GM10248 (cell line): ENCODE measurements at regions of chr9 and their contacts with region 1.

Region 1: DNA sequence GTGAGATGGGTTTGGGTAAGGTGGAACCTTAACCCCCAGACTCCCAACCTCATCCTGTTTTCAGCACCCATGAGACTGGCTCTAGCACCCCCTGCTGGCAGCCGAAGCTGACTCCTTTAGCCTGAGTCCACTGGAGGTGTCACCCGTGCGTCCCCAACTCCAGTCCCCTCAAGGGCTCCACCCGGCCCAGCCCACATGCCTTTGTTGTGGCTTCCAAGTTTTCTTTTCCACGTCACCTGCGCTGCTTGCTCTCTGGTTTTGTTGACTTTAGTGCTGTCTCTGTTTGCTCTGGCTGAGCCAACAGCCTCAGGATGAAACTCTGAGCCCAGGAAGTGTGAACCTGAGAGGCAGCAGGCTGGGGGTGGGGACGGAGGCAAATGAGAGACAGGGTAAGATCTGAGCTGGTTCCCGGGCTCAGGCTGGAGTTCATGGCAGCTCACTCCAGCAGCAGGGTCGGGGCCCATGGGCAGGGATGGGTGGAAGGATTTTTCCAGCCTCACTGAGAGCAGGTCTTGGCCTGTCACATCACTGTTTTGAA is 13.2 kb upstream of the AQP7 start:
- DNase-seq: peak; percentile 84
- CTCF ChIP-seq: peak; percentile 69

Region 2: DNA sequence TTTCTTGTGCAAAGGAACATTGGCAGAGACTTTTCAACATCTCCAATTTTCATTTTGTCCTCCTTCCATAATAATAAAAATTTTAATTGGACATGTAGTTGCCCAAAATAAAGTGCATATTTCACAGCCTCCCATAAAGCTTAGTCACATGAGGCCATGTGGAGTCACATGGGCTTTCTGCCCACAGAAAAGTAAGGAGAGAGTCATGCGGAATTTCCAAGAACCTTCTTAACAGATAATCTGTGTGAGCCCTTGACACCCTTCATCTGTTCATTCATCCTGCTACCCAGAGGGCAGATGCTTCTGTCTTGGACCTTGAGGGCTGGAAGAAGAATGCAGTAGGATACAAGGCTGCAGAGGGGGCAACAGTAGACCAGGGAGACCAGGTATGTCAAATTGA is 474.8 kb before region 1 on chr9:
- CTCF ChIA-PET with region 1: no interaction called
- POLR2A ChIA-PET with region 1: no interaction called
- DNase-seq: no peak
- CTCF ChIP-seq: no peak

Region 3: GRCh38 chr9:33393581-33393980 is 22.0 kb before region 1 on chr9:
- CTCF ChIA-PET with region 1: interaction called, 10 read pairs
- POLR2A ChIA-PET with region 1: interaction called, 3 read pairs
- DNase-seq: no peak
- CTCF ChIP-seq: no peak

Region 4: DNA sequence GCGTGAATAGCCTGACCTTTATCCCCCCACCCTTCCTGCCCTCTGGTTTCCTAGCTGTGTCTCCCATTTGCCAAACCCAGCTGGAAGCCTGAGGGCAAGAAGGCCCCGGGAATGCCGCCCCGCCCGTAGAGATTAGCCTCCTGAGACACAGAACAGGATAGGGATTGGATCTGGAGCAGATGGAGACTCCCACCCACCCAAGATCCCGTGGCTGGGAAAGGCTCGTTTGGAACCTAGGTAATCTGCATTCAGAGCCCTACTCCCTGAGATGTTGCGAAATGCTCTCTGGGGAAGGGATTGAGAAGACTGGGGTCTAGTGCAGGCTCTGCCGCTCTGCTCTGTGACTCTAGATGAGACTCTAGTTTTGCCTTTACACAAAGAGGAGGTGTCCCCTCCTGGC is 20.9 kb after region 1 on chr9:
- CTCF ChIA-PET with region 1: interaction called, 22 read pairs
- POLR2A ChIA-PET with region 1: no interaction called
- DNase-seq: no peak
- CTCF ChIP-seq: no peak

Region 5: DNA sequence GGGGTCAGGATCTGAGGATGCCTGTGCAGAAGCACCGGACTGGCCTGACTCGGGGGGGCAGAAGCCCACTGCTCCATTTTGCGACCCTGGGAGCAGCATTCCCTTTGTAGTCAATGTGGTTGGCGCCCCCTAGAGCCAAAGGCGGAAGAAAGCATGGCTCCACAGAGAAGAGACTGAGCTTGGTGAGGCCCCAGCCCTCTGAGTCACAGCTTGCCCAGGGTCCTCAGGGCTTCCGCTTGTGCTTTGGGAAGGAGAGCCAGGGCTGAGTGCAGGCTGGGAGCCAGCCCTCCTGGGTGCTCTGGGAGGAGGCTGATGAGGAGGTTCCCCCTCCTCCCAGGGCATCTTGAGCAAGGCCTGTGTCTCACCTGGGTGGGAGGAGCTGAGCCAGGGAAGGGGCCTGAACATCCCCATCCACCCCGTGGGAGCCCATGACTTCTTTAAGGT is 37.3 kb after region 1 on chr9:
- CTCF ChIA-PET with region 1: interaction called, 21 read pairs
- POLR2A ChIA-PET with region 1: no interaction called
- DNase-seq: peak; percentile 68
- CTCF ChIP-seq: peak; percentile 62

Region 6: GRCh38 chr9:33630459-33630858 is 214.9 kb after region 1 on chr9:
- CTCF ChIA-PET with region 1: no interaction called
- POLR2A ChIA-PET with region 1: no interaction called
- DNase-seq: no peak
- CTCF ChIP-seq: no peak